SK-N-SH (cell line): ENCODE measurements at regions of chr1 and their contacts with region 1.

Region 1: GRCh38 chr1:24526940-24527542 is 24.4 kb downstream of the RCAN3 start:
- DNase-seq: peak; percentile 41
- H3K4me3 ChIP-seq: no peak overlapping the region; a peak in 1 of 4 replicates
- H3K27ac ChIP-seq: no peak overlapping the region
- H3K4me1 ChIP-seq: no peaks in the 10 kb centered on the region
- H3K27me3 ChIP-seq: no peaks in the 10 kb centered on the region
- CTCF ChIP-seq: peak; percentile 69
- EP300 ChIP-seq: no peak
- RAD21 ChIP-seq: peak; percentile 48

Region 2: DNA sequence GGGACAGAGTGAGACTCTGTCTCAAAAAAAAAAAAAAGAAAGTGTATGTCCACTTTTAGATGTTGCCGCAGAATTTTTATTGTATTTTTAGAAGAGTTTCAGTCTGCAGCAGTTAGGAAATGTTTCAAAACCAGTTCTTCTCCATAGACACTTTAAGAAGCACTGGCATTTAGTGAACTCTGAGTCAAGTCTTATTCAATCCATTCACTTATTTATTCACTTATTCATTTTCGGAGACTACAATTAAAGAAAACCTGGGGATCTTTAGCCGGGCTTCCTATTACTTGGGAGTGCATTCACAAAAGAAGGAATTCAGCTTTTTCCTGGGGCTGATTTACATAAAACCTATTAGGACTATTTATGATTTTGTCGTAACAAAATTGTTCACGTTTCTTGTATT is 12.1 kb before region 1 on chr1:
- CTCF ChIA-PET with region 1: interaction called, 24 read pairs
- POLR2A ChIA-PET with region 1: no interaction called
- DNase-seq: no peak
- H3K4me3 ChIP-seq: no peak overlapping the region
- H3K27ac ChIP-seq: peak overlapping the region in 1 of 2 experiments; percentile 41; a peak in 1 of 4 replicates
- H3K4me1 ChIP-seq: peaks cover 0 to 3% of the 10 kb centered on the region in 2 experiments; a peak in 1 of 4 replicates
- H3K27me3 ChIP-seq: no peaks in the 10 kb centered on the region
- CTCF ChIP-seq: no peak
- EP300 ChIP-seq: no peak
- RAD21 ChIP-seq: no peak

Region 3: GRCh38 chr1:24541711-24542346 is 14.8 kb after region 1 on chr1:
- CTCF ChIA-PET with region 1: interaction called, 12 read pairs
- POLR2A ChIA-PET with region 1: no interaction called
- DNase-seq: peak; percentile 46
- H3K4me3 ChIP-seq: no peak overlapping the region; a peak in 1 of 4 replicates
- H3K27ac ChIP-seq: no peak overlapping the region
- H3K4me1 ChIP-seq: no peaks in the 10 kb centered on the region
- H3K27me3 ChIP-seq: no peaks in the 10 kb centered on the region
- CTCF ChIP-seq: peak; percentile 73
- EP300 ChIP-seq: no peak
- RAD21 ChIP-seq: peak; percentile 63

Region 4: DNA sequence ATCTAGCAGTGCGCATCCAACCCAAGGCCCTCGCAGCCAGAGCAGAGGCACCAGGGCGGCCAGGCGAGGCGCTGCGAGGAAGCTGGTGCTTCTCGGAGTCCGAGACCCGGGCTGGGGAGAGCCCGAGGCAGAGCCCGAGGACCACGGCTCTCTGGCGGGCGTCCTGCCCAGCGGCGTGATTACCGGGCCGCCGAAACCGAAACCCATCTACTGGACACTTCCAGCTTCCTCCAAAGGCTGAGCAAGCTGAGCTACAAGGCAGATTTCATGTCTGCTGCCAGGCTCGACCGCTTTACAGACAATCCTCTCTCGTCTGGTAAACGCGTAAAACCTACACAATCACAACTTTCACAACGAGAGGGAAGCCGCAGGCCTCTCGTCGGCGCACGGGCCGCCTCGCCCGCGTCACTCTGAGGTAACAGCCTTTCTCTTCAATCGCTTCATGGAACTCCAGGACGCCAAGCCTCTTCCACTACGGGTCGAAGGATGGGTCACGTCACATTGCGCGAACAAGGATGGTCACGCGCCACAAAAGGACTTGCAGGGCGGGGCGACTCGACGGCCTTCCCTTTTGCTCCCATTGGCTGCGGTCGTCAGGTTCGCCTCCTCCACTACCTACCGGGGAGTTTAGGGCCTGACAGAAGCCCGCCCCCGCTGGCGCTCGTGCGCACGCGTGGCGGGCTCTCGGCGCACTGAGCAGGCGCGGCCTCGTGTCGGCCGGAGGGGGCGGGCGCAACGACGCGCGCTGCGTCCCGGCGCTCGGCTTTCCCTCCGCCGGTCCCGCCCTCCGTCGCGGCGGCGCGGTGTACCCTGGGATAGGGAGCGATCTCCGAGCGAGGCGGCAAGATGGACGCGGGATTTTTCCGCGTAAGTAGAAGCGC is 115.7 kb after region 1 on chr1 and contains the start of gene SRRM1:
- CTCF ChIA-PET with region 1: no interaction called
- POLR2A ChIA-PET with region 1: no interaction called
- DNase-seq: peak; percentile 97
- H3K4me3 ChIP-seq: peak within 1 kb of the TSS; percentile 84 to 93
- H3K27ac ChIP-seq: peak within 1 kb of the TSS; percentile 97 to 100
- H3K4me1 ChIP-seq: peaks cover 15% of the 10 kb centered on the region in 2 experiments; a peak in 3 of 4 replicates
- H3K27me3 ChIP-seq: no peaks in the 10 kb centered on the region
- CTCF ChIP-seq: peak; percentile 19; the same call in 1 of the 2 replicates
- EP300 ChIP-seq: no peak
- RAD21 ChIP-seq: no peak
- polyA plus RNA-seq, gene SRRM1: 52.3 and 56.1 TPM in 2 replicates